ENCODE measurements at regions of chr13 and their contacts with region 1.

Region 1: DNA sequence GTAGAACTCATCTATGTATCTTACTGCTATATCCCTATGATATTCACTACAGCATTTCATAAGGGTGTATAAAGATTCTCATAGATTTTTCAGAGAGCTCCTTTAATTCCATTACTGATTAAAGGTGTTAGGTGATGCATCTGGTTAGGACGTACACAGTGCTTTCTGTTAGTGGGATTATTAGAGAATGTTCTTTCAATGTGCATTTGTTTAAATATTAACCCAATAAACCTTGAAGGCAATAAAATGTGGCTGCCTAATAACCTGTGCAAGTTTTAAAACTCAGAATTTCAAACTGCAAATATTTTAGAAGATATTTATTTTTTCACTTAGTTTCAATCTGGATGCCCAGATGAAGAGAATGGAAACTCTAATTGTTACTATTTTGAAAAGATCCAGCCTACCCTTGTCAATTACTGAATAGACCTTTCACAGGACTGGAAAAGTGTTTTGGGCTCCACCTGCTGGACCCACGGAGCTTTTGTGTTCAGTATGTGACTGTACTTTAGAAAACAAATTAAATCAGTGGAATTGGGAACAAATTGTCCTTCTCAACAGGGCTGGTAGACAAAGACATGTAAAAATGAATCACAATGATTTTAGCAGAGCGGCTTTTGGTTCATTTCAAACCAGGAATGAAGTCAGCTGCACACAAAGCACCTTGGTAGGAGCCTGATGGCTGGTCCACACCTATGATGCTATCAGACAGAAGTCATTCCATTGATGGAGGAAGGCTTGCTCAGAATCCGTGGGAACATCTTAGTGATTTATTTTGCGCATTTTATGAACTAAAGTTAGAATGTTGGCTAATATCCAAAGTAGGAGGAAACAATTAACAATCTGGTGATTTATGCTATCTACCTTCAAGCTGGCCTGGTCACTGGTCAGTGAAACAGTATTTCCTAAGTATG is 89.4 kb upstream of the RAP2A start:
- DNase-seq: peak; percentile 78
- H3K4me3 ChIP-seq: no peak overlapping the region
- H3K27ac ChIP-seq: peak overlapping the region; percentile 32
- H3K4me1 ChIP-seq: peaks cover 5% of the 10 kb centered on the region
- H3K27me3 ChIP-seq: no peaks in the 10 kb centered on the region
- CTCF ChIP-seq: peak; percentile 56 to 63
- POLR2A ChIP-seq: no peak

Region 2: DNA sequence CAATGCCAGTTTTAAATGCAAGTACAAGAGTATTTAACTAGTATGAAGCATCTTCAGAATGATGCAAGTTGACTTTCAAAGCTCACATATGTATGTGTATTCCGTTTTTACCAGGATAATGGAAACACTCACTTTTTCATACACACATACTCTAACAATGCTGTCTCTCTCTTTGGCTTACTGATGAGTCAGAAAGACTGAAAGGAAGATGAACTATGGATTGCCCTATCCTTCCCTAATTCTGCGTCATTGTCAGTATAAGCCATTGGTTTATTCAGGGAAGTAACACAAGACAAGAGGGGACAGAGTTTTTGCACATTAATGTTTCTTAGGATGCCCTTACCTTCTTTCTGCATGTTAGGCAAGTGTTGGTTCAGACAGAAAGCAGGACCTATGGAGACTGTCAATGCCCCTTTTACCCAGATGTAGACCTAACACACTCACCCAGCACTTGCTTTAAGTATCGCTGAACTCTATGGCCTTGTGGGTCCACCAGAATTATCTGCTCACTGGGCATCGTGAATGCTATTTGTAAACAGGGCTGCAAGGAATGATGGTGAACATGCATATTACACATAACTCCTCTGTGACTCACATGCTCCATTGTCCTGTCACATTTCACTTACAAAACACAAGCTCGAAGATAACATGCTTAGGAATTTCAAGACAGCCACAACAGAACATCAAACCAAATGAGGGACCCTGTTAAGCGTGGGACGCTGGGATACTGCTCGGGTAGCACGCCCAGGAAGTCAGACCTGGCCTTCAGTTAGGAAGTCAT is 340.2 kb before region 1 on chr13:
- CTCF ChIA-PET with region 1: no interaction called
- POLR2A ChIA-PET with region 1: no interaction called
- dilution Hi-C with region 1: no loop called
- intact Hi-C with region 1: no loop called
- DNase-seq: no peak
- H3K4me3 ChIP-seq: no peak overlapping the region
- H3K27ac ChIP-seq: no peak overlapping the region
- H3K4me1 ChIP-seq: no peaks in the 10 kb centered on the region
- H3K27me3 ChIP-seq: peaks cover 18 to 35% of the 10 kb centered on the region in 2 experiments
- CTCF ChIP-seq: no peak
- POLR2A ChIP-seq: no peak

Region 3: GRCh38 chr13:97212601-97213040 is 131.9 kb before region 1 on chr13:
- CTCF ChIA-PET with region 1: interaction called, 25 read pairs
- POLR2A ChIA-PET with region 1: no interaction called
- dilution Hi-C with region 1: no loop called
- intact Hi-C with region 1: loop called (anchors 1 kb)
- DNase-seq: peak; percentile 56
- H3K4me3 ChIP-seq: no peak overlapping the region
- H3K27ac ChIP-seq: no peak overlapping the region
- H3K4me1 ChIP-seq: no peaks in the 10 kb centered on the region
- H3K27me3 ChIP-seq: no peaks in the 10 kb centered on the region
- CTCF ChIP-seq: peak; percentile 52 to 72
- POLR2A ChIP-seq: no peak

Region 4: DNA sequence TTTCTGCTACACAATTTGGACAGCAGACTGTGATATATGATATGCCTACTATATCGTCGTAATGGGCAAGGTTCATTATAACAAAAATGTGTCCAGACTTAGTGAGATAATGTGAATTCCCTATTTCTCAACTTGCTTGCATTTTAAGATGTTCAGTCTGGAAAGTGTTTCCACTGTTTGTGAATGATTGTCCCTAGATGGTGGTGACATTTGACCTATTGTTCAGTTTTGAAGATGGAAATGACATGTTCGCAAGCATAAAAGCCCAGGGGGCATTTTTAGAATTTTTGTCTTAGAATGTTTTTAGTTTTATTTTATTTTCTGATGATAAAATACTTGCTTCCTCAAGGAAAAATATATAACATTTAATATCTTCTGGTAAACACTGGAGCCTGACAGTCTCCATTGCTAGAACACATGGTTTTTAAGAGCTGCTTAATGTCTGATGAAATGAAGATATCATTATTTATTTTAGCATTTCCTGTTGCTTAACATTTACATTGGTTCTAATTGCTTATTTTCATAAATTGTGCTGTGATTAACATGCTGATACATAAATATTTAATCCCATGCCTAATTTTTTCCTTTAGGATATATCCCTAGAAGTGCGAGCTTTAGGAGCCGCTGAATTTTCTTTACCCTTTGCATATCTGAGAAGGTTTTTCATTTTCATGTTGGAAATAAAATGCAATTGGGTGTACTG is 95.3 kb before region 1 on chr13:
- CTCF ChIA-PET with region 1: interaction called, 11 read pairs
- POLR2A ChIA-PET with region 1: no interaction called
- dilution Hi-C with region 1: no loop called
- intact Hi-C with region 1: no loop called
- DNase-seq: no peak
- H3K4me3 ChIP-seq: no peak overlapping the region
- H3K27ac ChIP-seq: peak overlapping the region; percentile 39
- H3K4me1 ChIP-seq: peaks cover 63% of the 10 kb centered on the region
- H3K27me3 ChIP-seq: no peaks in the 10 kb centered on the region
- CTCF ChIP-seq: no peak
- POLR2A ChIP-seq: no peak

Region 5: DNA sequence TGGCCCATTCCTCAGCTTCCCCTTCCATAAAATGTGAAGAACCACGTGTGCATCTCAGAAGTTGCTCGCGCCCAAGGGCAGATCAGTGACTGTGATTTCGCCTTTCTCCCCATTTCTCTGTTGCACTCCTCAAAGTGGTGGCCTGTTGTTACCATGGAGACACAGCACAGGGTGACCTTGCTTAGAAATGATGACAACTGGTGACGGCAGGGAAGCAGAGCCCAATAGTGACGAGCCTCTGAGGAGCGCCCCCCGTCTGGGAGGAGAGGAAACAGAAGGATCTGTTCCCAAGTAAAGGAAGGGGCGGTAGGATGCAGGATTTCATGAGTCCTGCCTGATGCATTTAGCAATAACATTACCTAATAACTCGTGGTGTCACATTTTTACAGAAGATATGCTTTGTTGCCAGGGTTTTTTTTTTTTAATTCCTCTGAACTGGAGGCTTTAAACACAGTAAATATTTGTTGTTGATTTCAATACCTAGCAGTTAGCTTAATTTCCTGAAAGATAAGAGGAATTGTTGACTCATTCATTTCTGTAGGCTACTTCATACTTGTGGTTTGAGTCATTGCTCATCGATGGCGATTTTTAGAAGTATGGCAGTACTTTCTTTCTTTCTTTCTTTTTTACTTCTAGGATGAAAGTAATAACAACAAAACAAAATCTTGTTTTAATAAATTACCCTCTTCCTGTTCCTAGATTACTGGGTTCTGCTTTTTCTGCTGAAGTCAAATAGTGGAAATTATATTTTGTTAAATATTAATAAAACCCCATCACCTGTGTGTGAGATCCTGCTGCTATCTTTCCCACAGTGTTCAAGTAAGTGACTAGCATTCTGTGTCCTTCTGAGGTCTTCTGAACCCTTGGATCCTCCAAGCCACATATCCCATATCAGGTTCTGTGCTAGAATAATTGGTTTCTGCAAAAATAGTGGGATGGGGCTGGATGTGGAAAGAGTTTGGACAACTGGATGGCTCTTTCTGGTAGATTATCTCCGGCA is 86.4 kb before region 1 on chr13:
- CTCF ChIA-PET with region 1: interaction called, 6 read pairs
- POLR2A ChIA-PET with region 1: no interaction called
- dilution Hi-C with region 1: no loop called
- intact Hi-C with region 1: loop called (anchors 1 kb)
- DNase-seq: peak; percentile 98
- H3K4me3 ChIP-seq: no peak overlapping the region
- H3K27ac ChIP-seq: peak overlapping the region; percentile 98
- H3K4me1 ChIP-seq: peaks cover 76% of the 10 kb centered on the region
- H3K27me3 ChIP-seq: no peaks in the 10 kb centered on the region
- CTCF ChIP-seq: peak in 1 of 2 donors; percentile 21
- POLR2A ChIP-seq: peak; percentile 46

Region 6: DNA sequence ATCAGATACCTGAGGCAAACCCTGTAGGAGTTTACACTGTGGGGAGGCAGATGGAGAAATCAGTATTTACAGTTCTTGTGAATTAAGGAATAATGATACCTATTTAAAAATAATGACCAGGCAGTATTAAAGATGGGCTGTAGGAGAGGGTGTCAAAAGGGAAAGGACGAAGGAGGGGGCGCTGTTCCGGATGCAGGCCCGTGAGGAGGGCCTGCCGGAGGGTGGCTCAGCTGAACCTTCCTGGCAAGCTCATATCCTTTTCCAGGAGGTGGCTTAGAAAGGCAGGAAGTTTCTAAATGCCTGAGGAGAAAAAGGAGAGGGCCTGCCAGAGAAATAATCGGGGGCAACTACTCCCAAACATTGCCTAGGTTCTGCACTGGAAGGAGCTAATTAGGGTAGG is 75.7 kb before region 1 on chr13:
- CTCF ChIA-PET with region 1: interaction called, 12 read pairs
- POLR2A ChIA-PET with region 1: no interaction called
- dilution Hi-C with region 1: no loop called
- intact Hi-C with region 1: loop called (anchors 2 kb)
- DNase-seq: peak; percentile 72
- H3K4me3 ChIP-seq: no peak overlapping the region
- H3K27ac ChIP-seq: peak overlapping the region; percentile 77
- H3K4me1 ChIP-seq: peaks cover 71% of the 10 kb centered on the region
- H3K27me3 ChIP-seq: no peaks in the 10 kb centered on the region
- CTCF ChIP-seq: peak; percentile 35 to 36
- POLR2A ChIP-seq: no peak

Region 7: DNA sequence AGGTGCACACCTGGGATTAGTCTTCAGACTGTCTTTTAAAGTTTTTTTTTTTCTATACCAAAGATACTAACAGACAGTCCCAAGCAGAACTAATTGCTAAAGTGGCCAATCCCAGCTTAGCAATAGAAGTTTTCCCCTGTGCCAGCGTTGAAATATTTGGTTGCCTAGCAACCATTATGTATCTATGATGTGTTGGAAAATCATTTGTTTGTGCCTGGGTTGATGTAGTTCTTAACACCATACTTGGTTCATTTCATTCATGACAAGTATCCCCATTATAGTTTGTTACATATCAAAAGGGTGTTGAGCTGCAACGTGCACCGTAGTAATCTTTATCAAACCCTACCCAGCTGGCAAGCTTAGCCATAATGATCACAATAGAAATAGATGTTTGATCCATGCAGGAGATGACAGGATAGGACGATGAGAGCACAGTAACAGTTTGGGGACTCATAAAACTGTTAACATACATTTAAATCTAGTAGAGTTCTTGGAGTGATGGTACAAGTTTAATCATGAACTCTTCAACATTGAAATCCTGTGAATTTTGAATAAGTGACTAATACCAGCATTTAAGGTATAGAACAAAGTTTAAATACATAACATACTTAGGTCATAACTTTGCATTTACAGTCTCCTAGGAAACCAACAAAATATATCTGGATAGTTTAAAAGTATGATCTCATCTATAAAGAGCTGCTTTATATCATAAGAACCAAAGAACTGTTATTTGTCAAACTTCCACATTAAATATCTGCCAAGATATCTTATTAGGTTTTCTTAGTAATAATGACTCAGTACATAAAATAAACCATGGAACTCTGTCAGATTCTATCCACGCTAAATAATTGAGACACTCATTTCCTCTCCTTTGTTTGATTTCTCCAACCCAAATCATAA is 49.0 kb before region 1 on chr13:
- CTCF ChIA-PET with region 1: interaction called, 5 read pairs
- POLR2A ChIA-PET with region 1: no interaction called
- dilution Hi-C with region 1: no loop called
- intact Hi-C with region 1: loop called (anchors 1 kb)
- DNase-seq: peak; percentile 85
- H3K4me3 ChIP-seq: peak overlapping the region in 1 of 3 experiments; percentile 29
- H3K27ac ChIP-seq: peak overlapping the region; percentile 98
- H3K4me1 ChIP-seq: peaks cover 37% of the 10 kb centered on the region
- H3K27me3 ChIP-seq: no peaks in the 10 kb centered on the region
- CTCF ChIP-seq: no peak
- POLR2A ChIP-seq: peak; percentile 24

Region 8: DNA sequence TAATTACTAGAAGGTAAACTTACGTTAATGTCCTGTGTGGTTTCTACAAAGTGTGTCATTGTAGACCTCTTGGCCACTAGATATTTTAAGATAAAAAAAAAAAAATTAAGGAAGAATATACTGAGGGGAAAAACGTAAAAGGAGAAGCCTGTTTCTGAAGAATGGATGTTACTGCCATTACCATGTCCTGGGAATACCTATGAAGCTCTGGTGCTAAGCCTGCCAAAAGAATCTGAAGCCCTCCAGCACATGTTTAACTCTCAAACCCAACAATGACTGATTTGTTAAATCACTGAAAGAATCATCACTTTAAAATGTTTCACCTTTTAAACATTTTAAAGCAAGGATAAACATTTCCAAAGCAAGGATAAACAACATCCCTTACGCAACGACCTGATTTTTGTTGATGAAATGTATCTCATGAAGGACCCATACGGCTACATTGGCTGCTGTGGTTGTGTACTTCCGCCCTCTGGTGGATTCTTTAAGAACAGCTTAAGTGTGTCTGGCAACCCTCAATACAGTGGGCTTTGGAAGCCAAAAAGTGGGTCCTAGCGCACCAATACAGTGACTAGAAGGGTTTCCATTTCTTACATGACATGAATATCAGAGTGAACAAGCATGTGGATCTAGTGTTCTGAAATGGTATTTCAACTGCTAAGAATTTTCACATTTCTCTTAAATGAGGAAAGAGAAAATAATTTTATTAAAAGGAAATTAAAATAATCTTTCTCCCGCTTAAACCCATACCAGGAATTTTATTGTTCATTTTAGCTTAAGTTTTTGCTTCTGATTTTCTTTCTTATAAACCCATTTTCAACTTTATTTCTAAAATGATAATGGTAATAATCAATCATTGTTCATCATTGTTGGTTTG is 14.9 kb after region 1 on chr13:
- CTCF ChIA-PET with region 1: interaction called, 15 read pairs
- POLR2A ChIA-PET with region 1: no interaction called
- dilution Hi-C with region 1: no loop called
- intact Hi-C with region 1: no loop called
- DNase-seq: peak; percentile 81
- H3K4me3 ChIP-seq: no peak overlapping the region
- H3K27ac ChIP-seq: peak overlapping the region; percentile 20
- H3K4me1 ChIP-seq: no peaks in the 10 kb centered on the region
- H3K27me3 ChIP-seq: no peaks in the 10 kb centered on the region
- CTCF ChIP-seq: peak; percentile 66 to 80
- POLR2A ChIP-seq: no peak

Region 9: GRCh38 chr13:97386801-97387484 is 42.4 kb after region 1 on chr13:
- CTCF ChIA-PET with region 1: no interaction called
- POLR2A ChIA-PET with region 1: no interaction called
- dilution Hi-C with region 1: no loop called
- intact Hi-C with region 1: no loop called
- DNase-seq: no peak
- H3K4me3 ChIP-seq: no peak overlapping the region
- H3K27ac ChIP-seq: no peak overlapping the region
- H3K4me1 ChIP-seq: no peaks in the 10 kb centered on the region
- H3K27me3 ChIP-seq: no peaks in the 10 kb centered on the region
- CTCF ChIP-seq: no peak
- POLR2A ChIP-seq: no peak